ENCODE measurements at regions of chr10 and their contacts with region 1.

Region 1: DNA sequence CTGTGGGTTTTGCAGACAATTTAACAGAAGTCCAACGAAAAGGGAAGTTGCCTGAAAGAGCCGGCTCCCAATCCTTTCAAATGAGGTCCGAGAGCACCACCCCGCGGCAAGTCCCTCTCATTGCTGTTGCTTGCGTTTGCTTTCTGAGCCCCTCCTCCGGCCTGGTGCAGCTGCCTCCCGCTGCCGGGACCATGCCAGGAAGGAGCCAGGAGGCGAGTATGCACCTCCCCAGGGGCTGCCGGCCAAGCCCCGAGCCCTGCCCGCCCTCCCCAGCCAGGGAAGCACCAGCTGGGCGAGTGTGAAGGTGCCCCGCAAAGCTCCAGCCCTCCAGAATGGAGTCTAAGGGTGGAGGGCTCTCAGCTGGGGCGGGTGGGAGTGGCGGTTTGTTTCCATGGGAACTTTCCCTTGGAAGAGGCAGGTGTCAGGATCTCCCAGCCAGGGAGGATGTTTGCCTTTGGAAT is 25.8 kb upstream of the PPP2R2D start:
- DNase-seq: peak; percentile 41 to 67
- H3K4me3 ChIP-seq: no peak overlapping the region
- H3K27ac ChIP-seq: no peak overlapping the region
- H3K4me1 ChIP-seq: no peaks in the 10 kb centered on the region
- H3K27me3 ChIP-seq: peaks cover 77% of the 10 kb centered on the region
- CTCF ChIP-seq: peak; percentile 73

Region 2: GRCh38 chr10:130686689-130687300 is 1188.2 kb before region 1 on chr10:
- CTCF ChIA-PET with region 1: no interaction called
- POLR2A ChIA-PET with region 1: no interaction called
- intact Hi-C with region 1: loop called (anchors 5 kb)
- DNase-seq: no peak
- H3K4me3 ChIP-seq: no peak overlapping the region
- H3K27ac ChIP-seq: no peak overlapping the region
- H3K4me1 ChIP-seq: no peaks in the 10 kb centered on the region
- H3K27me3 ChIP-seq: no peaks in the 10 kb centered on the region
- CTCF ChIP-seq: no peak

Region 3: GRCh38 chr10:131272897-131273451 is 602.0 kb before region 1 on chr10:
- CTCF ChIA-PET with region 1: interaction called, 11 read pairs
- POLR2A ChIA-PET with region 1: no interaction called
- intact Hi-C with region 1: no loop called
- DNase-seq: no peak
- H3K4me3 ChIP-seq: no peak overlapping the region
- H3K27ac ChIP-seq: no peak overlapping the region
- H3K4me1 ChIP-seq: no peaks in the 10 kb centered on the region
- H3K27me3 ChIP-seq: peaks cover 54% of the 10 kb centered on the region
- CTCF ChIP-seq: no peak

Region 4: DNA sequence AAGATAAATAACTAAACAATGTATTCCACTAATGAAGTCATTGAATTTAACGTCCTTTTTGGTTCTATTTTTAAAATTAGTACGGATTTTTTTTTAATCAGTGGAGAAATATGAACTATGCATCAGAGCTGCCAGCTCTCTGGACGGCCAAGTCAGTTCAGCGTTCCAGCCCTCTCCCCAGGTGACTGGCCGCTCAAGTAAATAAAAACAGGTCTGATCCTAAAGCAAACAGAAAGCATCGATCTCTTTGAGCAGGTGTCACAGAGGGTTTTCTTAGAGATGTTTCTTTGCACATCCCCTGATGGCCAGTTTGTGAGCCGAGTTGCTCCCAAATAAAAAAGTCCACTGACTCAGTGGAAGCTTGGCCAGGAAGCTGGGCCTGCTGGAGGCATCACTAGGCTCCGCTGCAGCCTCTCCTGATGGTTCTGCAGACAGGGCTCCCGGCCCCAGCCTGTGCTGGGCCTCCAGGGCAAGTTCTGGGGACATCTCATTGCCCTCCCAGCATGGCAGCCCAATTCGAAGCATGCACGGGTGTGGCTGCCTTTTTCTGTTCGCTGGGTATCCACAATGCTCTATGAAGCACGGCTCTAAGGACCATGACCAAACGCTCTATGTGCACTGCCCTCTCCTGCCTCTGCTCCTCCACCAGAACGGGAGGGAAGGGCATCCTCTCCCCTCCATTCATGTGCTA is 48.9 kb before region 1 on chr10:
- CTCF ChIA-PET with region 1: no interaction called
- POLR2A ChIA-PET with region 1: no interaction called
- intact Hi-C with region 1: no loop called
- DNase-seq: no peak
- H3K4me3 ChIP-seq: no peak overlapping the region
- H3K27ac ChIP-seq: no peak overlapping the region
- H3K4me1 ChIP-seq: no peaks in the 10 kb centered on the region
- H3K27me3 ChIP-seq: peaks cover 59% of the 10 kb centered on the region
- CTCF ChIP-seq: no peak

Region 5: GRCh38 chr10:132257271-132257670 is 382.2 kb after region 1 on chr10:
- CTCF ChIA-PET with region 1: no interaction called
- POLR2A ChIA-PET with region 1: no interaction called
- intact Hi-C with region 1: no loop called
- DNase-seq: peak in 1 of 2 experiments; percentile 25
- H3K4me3 ChIP-seq: no peak overlapping the region
- H3K27ac ChIP-seq: no peak overlapping the region
- H3K4me1 ChIP-seq: no peaks in the 10 kb centered on the region
- H3K27me3 ChIP-seq: no peaks in the 10 kb centered on the region
- CTCF ChIP-seq: no peak

Measured in PC-9 (cell line).